ENCODE measurements at regions of chr6 and their contacts with region 1.

Region 1: DNA sequence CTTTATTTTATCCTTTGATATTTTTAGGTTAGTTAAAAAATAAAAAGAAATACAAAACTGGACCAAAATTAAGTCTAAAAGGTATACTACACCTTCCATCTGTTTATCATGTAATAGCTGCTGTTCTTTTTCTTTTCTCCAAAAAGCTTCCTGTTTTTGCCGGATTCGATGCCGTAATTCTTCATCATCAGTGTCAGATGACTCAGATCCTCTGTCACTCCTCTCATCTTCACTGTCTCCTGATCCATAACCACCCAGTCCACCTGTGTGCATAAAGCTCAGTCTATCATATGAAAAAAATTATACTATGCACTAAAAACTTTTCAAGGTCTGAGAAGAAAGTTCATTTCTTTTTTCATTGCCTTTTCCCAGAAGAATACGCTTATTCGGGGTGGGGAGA is 8.5 kb upstream of the COQ3 start:
- DNase-seq: no peak
- H3K4me3 ChIP-seq: no peak overlapping the region
- H3K27ac ChIP-seq: no peak overlapping the region
- H3K4me1 ChIP-seq: no peaks in the 10 kb centered on the region
- CTCF ChIP-seq: no peak

Region 2: DNA sequence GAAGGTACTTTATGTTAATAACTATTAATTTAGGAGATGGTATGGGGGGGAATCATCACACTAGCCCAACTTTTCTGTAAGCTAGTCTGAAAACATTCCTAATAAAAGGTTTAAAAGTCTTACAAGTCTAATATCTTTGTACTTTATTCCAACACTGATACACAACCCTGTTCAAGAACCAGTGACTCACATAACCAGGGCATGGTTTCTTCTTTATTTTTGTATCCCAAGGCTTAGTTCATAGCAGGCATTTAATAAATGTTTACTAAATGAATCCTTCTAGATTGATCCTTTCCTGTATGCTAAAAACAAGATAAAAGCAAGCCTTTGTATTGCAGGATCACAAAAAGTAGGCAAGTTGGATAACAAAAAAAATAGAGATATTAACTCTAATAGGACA is 13.0 kb after region 1 on chr6:
- CTCF ChIA-PET with region 1: no interaction called
- POLR2A ChIA-PET with region 1: interaction called, 10 read pairs
- intact Hi-C with region 1: no loop called
- DNase-seq: no peak
- H3K4me3 ChIP-seq: no peak overlapping the region
- H3K27ac ChIP-seq: no peak overlapping the region
- H3K4me1 ChIP-seq: peaks cover 18% of the 10 kb centered on the region
- CTCF ChIP-seq: no peak

Region 3: GRCh38 chr6:99446076-99446475 is 43.6 kb after region 1 on chr6:
- CTCF ChIA-PET with region 1: no interaction called
- POLR2A ChIA-PET with region 1: no interaction called
- intact Hi-C with region 1: no loop called
- DNase-seq: no peak
- H3K4me3 ChIP-seq: no peak overlapping the region
- H3K27ac ChIP-seq: no peak overlapping the region
- H3K4me1 ChIP-seq: no peaks in the 10 kb centered on the region
- CTCF ChIP-seq: no peak

Region 4: DNA sequence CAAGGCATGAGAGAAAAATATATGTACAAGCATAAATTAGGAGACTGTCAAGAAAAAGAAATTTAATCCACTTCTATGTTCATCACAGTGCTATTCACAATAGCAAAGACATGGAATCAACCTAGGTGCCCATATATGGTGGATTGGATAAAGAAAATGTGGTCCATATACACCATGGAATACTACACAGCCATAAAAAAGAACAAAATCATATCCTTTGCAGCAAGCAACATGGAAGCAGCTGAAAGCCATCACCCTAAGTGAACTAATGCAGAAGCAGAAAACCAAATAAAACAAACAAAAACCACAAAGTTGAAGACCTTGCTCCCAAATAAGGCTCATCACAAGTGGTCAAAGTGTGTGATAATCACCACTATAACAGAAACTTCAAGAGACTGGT is 76.0 kb after region 1 on chr6:
- CTCF ChIA-PET with region 1: no interaction called
- POLR2A ChIA-PET with region 1: no interaction called
- intact Hi-C with region 1: no loop called
- DNase-seq: no peak
- H3K4me3 ChIP-seq: no peak overlapping the region
- H3K27ac ChIP-seq: no peak overlapping the region
- H3K4me1 ChIP-seq: no peaks in the 10 kb centered on the region
- CTCF ChIP-seq: no peak